ENCODE measurements at regions of chr17 and their contacts with region 1.

Region 1: DNA sequence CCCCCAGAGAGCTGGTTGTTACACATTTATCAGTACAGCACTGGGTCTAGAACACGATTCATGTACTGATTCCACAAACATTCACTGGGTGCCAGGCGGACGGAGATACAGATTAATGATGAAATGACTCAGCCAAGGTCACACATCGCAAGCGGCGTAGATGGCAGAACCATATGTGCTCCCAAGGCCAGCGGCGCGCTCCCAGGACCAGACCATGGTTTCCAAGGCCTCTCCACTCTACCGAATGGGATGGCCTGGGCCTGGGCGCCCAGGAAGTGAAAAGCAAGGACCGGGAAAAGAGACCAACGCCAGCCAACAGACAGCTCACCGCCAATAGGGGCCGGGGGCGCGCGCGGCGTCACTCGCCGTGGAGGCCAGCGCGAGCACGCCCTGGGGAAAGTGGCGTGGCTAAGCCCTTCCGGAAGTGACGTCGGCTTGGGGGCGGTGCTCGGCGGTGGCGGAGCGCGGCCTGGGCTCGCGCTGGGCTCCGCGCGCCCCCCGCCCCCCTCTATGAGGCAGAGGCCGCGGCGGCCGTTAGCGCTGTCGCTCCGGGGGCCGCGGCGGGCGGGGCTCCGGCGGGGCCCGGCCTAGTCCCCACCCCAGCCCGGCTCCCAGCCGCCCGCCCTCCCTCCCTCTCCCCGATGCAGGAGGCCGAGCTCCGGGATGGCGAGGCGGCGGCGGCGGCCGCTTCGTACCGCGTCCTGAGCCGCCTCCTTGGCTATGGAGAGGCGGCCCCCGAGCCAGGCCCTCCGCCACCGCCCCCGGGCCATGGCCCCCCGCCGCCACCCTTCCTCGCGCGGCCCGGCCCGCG is at the start of gene SOCS7:
- DNase-seq: peak; percentile 92
- H3K4me3 Mint-ChIP-seq: peak within 1 kb of the TSS; percentile 99
- H3K27ac Mint-ChIP-seq: peak within 1 kb of the TSS; percentile 95
- H3K4me1 Mint-ChIP-seq: peaks cover 40% of the 10 kb centered on the region
- H3K27me3 Mint-ChIP-seq: no peaks in the 10 kb centered on the region
- total RNA-seq, gene SOCS7: 22.1 to 25.1 TPM

Region 2: GRCh38 chr17:38333635-38334295 is 17.9 kb before region 1 on chr17:
- CTCF ChIA-PET with region 1: interaction called, 14 read pairs
- intact Hi-C with region 1: no loop called
- DNase-seq: peak; percentile 73
- H3K4me3 Mint-ChIP-seq: no peak overlapping the region
- H3K27ac Mint-ChIP-seq: no peak overlapping the region
- H3K4me1 Mint-ChIP-seq: no peaks in the 10 kb centered on the region
- H3K27me3 Mint-ChIP-seq: peaks cover 3% of the 10 kb centered on the region

Region 3: DNA sequence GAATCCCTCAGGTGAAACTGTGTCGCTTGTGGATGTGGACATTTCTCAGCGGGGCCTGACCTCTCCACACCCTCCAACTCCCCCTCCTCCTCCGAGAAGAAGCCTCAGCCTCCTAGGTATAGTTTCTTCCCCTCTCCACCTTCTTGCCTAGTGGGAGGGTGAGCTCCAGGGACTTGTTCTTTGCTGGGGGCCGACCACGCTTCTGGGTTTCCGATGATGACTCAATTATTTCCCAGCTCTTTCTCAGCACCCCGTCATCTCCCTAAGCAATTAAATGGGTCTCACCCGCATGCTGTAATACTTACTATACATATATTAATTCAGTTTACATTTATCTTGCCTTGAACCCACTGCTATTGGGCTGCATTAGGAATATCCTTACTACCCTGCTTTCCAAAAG is 13.1 kb after region 1 on chr17:
- CTCF ChIA-PET with region 1: interaction called, 26 read pairs
- intact Hi-C with region 1: no loop called
- DNase-seq: no peak
- H3K4me3 Mint-ChIP-seq: no peak overlapping the region
- H3K27ac Mint-ChIP-seq: no peak overlapping the region
- H3K4me1 Mint-ChIP-seq: no peaks in the 10 kb centered on the region
- H3K27me3 Mint-ChIP-seq: no peaks in the 10 kb centered on the region

Region 4: GRCh38 chr17:38403491-38403890 is 51.9 kb after region 1 on chr17:
- CTCF ChIA-PET with region 1: interaction called, 12 read pairs
- intact Hi-C with region 1: no loop called
- DNase-seq: no peak
- H3K4me3 Mint-ChIP-seq: no peak overlapping the region
- H3K27ac Mint-ChIP-seq: no peak overlapping the region
- H3K4me1 Mint-ChIP-seq: no peaks in the 10 kb centered on the region
- H3K27me3 Mint-ChIP-seq: no peaks in the 10 kb centered on the region

Region 5: GRCh38 chr17:38415250-38416194 is 63.9 kb after region 1 on chr17:
- CTCF ChIA-PET with region 1: interaction called, 193 read pairs
- intact Hi-C with region 1: loop called (anchors 1 kb)
- DNase-seq: peak; percentile 64
- H3K4me3 Mint-ChIP-seq: peak overlapping the region; percentile 76
- H3K27ac Mint-ChIP-seq: peak overlapping the region; percentile 78
- H3K4me1 Mint-ChIP-seq: peaks cover 16% of the 10 kb centered on the region
- H3K27me3 Mint-ChIP-seq: peaks cover 29% of the 10 kb centered on the region

Region 6: DNA sequence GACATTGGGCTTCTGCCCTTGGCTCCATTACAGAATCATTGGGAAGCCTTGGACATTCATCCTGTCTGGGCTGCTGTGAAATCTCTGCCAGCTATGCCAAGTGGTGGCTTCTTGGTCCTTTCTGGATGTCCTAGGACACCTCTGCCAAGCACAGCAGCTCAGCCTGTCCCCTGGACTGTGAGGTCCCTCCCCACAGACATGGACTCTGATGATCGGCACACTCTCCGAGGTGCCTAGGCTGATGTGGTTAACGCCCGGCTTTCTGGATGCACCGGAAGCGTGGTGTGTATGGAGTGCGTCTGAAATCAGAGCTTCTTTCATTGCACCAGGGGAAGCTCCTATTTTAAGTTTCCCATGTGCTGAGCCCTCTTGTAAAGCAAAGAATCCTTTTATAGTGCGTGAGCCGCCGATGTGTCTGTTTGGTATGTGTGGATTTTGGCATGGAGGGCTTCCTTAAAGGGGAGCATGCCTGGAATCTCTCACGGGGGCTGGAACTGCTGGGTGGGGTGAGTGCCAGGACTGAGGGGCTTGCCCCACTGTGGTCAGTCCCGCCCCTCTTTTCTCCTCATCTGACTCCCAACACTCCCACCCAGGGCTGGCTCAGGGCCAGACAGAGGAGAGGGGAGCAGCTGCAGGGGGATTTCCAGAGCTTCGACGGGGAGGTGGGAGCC is 69.7 kb after region 1 on chr17:
- CTCF ChIA-PET with region 1: interaction called, 193 read pairs
- intact Hi-C with region 1: no loop called
- DNase-seq: no peak
- H3K4me3 Mint-ChIP-seq: no peak overlapping the region
- H3K27ac Mint-ChIP-seq: no peak overlapping the region
- H3K4me1 Mint-ChIP-seq: peaks cover 5% of the 10 kb centered on the region
- H3K27me3 Mint-ChIP-seq: peaks cover 56% of the 10 kb centered on the region

Region 7: DNA sequence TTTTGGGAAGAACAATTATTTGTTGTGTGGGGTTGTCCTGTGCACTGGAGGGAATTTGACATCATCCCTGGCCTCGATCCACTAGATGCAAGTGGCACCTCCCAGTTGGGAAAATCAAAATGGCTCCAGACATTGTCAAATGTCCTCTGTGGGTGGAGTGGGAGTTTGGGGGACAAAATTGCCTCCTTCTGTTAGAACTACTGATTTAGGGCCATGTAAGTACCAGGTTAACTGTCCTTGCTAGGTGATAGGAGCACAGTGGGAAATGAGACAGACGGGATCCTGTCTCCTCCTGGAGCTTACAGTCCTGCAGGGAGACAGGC is 133.5 kb after region 1 on chr17:
- CTCF ChIA-PET with region 1: interaction called, 5 read pairs
- intact Hi-C with region 1: loop called (anchors 5 kb)
- DNase-seq: no peak
- H3K4me3 Mint-ChIP-seq: no peak overlapping the region
- H3K27ac Mint-ChIP-seq: no peak overlapping the region
- H3K4me1 Mint-ChIP-seq: no peaks in the 10 kb centered on the region
- H3K27me3 Mint-ChIP-seq: no peaks in the 10 kb centered on the region

Region 8: GRCh38 chr17:38809828-38810227 is 458.2 kb after region 1 on chr17:
- CTCF ChIA-PET with region 1: no interaction called
- intact Hi-C with region 1: no loop called
- DNase-seq: no peak
- H3K4me3 Mint-ChIP-seq: no peak overlapping the region
- H3K27ac Mint-ChIP-seq: no peak overlapping the region
- H3K4me1 Mint-ChIP-seq: no peaks in the 10 kb centered on the region
- H3K27me3 Mint-ChIP-seq: no peaks in the 10 kb centered on the region